ENCODE measurements at regions of chr11 and their contacts with region 1.

Region 1: DNA sequence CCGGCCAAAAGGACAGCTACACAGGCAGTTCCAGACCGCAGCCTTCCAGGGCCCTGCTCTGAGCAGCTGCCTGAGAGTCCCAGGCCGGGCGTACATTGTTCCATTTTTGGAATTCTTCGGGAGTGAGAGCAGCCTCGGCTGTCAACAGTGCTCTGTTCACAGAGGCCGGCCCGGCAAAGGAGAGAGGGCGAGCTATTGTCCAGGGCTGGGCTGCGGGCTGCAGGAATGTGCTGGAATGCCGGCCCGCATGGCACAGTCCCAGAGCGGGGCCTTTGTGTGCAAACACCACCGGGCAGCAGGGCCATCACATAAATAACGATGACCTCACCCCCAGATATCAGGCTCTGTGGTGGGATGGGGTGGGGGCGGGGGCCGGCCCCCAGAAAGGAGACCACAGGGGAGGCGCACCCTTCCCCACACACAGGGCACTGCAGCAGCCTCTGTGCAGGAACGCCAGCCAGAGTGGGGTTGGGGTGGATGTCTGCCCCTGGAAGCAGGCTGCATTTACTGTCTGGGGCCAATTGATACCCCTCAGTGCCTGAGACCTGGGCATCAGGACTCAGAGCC is 15.8 kb downstream of the LINC01488 start:
- DNase-seq: peak; percentile 87 to 96 (median 91)
- ATAC-seq: peak; percentile 95 to 98 (median 97)
- H3K4me3 ChIP-seq: no peak overlapping the region
- H3K27ac ChIP-seq: peak overlapping the region; percentile 64 to 94 (median 88)
- H3K4me1 ChIP-seq: peaks cover 3 to 70% (median 28%) of the 10 kb centered on the region in 12 donors
- H3K27me3 ChIP-seq: no peaks in the 10 kb centered on the region
- CTCF ChIP-seq: peak in 2 of 12 donors; percentile 7 to 15
- POLR2A ChIP-seq: peak in 1 of 2 donors; percentile 23

Region 2: GRCh38 chr11:69200331-69201065 is 296.8 kb before region 1 on chr11:
- intact Hi-C with region 1: no loop called
- DNase-seq: peak; percentile 53 to 76 (median 55)
- ATAC-seq: peak in 3 of 4 donors; percentile 34 to 74 (median 54)
- H3K4me3 ChIP-seq: no peak overlapping the region
- H3K27ac ChIP-seq: no peak overlapping the region
- H3K4me1 ChIP-seq: peaks cover 0 to 13% (median 8%) of the 10 kb centered on the region in 12 donors
- H3K27me3 ChIP-seq: peaks cover 0 to 8% (median 0%) of the 10 kb centered on the region in 9 donors
- CTCF ChIP-seq: no peak
- POLR2A ChIP-seq: no peak

Region 3: DNA sequence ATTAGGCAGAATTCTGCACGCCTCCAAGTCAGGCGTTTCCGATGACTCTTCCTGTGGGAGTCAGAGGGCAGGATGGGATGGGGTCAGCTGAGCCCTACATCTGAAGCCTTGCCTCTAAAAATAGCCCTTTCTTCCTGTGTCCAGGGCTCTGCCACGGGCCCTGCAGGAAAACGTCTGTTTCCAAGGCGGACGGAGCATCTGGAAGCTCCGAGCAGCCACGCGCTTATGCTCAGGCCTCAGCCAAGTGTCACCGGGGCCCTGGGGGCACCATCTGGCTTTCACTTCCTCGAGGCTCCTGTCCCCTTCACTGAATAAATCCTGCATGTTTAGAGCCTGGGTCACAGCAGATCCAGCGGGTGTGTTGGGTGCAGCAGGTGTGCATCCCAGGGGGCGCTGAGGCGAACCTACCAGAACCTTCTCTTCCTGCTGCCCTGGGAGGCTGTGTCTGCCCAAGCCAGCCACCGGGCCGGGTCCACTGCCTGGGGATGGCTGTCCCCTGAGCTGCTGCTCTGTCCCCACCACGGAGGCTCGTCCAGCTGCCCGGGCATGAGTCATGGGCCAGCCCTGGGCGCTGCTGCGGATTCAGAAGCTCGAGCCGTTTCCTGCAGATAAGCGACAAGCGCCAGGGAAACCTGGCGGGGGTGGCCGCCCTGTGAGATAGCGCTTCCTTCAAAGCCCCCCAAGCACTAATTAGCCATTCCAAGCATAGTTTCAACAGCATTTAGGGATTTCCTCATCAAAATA is 47.8 kb before region 1 on chr11:
- intact Hi-C with region 1: loop called in 1 of 10 experiments (anchors 2 kb)
- DNase-seq: peak; percentile 80 to 91 (median 88)
- ATAC-seq: peak; percentile 55 to 83 (median 78)
- H3K4me3 ChIP-seq: peak overlapping the region in 2 of 12 donors; percentile 0 to 9
- H3K27ac ChIP-seq: peak overlapping the region in 11 of 12 donors; percentile 65 to 93 (median 80)
- H3K4me1 ChIP-seq: peaks cover 0 to 45% (median 31%) of the 10 kb centered on the region in 12 donors
- H3K27me3 ChIP-seq: no peaks in the 10 kb centered on the region
- CTCF ChIP-seq: peak in 1 of 12 donors; percentile 6
- POLR2A ChIP-seq: no peak

Region 4: GRCh38 chr11:69711822-69712801 is 214.8 kb after region 1 on chr11:
- intact Hi-C with region 1: no loop called
- DNase-seq: no peak
- ATAC-seq: no peak
- H3K4me3 ChIP-seq: no peak overlapping the region
- H3K27ac ChIP-seq: no peak overlapping the region
- H3K4me1 ChIP-seq: peaks cover 0 to 11% (median 0%) of the 10 kb centered on the region in 12 donors
- H3K27me3 ChIP-seq: peaks cover 0 to 40% (median 6%) of the 10 kb centered on the region in 9 donors
- CTCF ChIP-seq: no peak
- POLR2A ChIP-seq: no peak